ENCODE measurements at regions of chr21 and their contacts with region 1.

Region 1: DNA sequence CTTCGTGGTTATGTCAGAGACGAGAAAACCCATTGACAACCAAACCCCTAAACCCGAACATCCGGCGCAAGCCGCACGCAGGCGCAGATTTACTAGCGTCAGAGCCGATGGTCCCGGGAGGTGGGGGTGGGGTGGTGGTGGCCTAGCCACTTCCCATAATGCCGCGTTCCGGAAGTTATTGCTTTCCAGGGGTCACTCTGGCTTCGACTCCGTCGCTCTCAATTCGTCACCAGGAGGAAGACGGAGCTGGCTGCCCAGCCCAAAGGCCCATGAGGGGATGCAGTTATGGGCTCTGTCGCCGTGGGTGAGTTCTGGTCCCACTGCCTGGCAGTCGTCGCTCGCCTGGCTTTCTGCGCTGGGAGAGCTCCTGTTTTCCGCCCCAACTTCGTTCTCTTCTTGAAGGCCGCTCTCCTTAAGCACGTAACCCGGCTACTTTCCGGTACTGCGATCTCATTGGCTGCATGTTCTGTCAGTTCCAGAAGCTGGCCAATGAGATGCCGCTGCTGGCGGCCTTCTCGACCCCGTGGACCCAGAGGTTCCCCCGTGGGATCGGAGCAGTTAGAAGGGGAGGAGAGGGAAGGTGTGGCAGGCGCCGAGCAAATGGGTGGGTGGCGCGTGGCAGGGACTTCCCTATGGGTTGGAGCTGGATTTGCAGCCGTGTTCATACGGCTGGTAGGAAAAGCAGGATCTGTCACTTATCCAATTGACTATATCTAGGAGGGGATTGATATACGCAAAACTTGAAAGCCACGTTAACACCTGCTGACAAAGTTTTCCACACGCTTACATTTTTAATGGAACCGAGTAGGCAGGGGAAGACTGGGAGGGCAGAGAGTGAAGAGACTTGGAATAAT is at the start of gene USP16:
- DNase-seq: peak; percentile 97
- ATAC-seq: peak; percentile 97
- H3K4me3 Mint-ChIP-seq: peak within 1 kb of the TSS; percentile 96
- H3K27ac Mint-ChIP-seq: peak within 1 kb of the TSS; percentile 97
- H3K4me1 Mint-ChIP-seq: peaks cover 66% of the 10 kb centered on the region
- H3K27me3 Mint-ChIP-seq: no peaks in the 10 kb centered on the region
- total RNA-seq, gene USP16: 26.7 to 35.5 TPM

Region 2: DNA sequence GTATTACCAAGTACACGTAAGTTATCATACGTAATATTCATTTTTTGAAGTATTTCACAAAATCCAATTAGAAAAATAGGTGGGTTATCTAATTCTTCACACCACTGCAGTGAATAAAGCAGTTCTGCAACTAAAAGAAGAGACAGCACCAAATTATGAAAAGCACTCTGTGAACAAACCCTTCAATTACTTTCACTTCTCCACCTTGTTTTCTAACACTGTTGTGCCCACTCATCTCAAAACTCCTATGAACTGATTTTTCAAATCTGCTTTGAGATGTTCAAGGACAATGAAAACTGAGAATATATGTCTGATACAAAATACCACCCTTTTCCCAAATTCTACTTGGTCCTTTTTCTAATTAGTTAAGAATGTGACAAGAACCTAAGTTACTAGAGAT is 71.5 kb before region 1 on chr21:
- CTCF ChIA-PET with region 1: no interaction called
- DNase-seq: no peak
- ATAC-seq: no peak
- H3K4me3 Mint-ChIP-seq: no peak overlapping the region
- H3K27ac Mint-ChIP-seq: no peak overlapping the region
- H3K4me1 Mint-ChIP-seq: peaks cover 20% of the 10 kb centered on the region
- H3K27me3 Mint-ChIP-seq: no peaks in the 10 kb centered on the region

Region 3: DNA sequence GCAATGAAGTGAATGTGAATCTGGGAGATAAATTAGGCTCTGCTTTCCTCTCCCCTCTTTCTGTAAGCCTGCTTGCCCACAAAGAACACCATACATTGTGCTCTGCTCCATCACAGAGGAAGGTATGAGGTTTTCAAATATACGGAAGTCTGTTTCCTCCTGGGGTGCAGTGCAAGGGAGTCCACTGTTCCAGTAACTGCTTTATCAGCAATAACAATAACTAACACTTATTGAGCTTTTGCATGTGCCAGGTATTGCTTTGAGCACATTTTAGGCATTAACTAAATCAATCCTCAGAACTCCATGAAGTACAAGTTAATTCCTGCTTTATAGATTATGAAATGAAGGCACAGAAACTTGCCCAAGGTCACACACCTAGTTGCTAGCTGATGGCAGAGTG is 42.1 kb before region 1 on chr21:
- CTCF ChIA-PET with region 1: no interaction called
- DNase-seq: no peak
- ATAC-seq: no peak
- H3K4me3 Mint-ChIP-seq: no peak overlapping the region
- H3K27ac Mint-ChIP-seq: peak overlapping the region; percentile 33
- H3K4me1 Mint-ChIP-seq: peaks cover 6% of the 10 kb centered on the region
- H3K27me3 Mint-ChIP-seq: no peaks in the 10 kb centered on the region

Region 4: GRCh38 chr21:28992526-28993292 is 32.0 kb before region 1 on chr21 and contains the start of gene LTN1:
- CTCF ChIA-PET with region 1: interaction called, 14 read pairs
- DNase-seq: peak; percentile 100
- ATAC-seq: peak; percentile 95
- H3K4me3 Mint-ChIP-seq: peak within 1 kb of the TSS; percentile 87
- H3K27ac Mint-ChIP-seq: peak within 1 kb of the TSS; percentile 96
- H3K4me1 Mint-ChIP-seq: peaks cover 33% of the 10 kb centered on the region
- H3K27me3 Mint-ChIP-seq: no peaks in the 10 kb centered on the region
- total RNA-seq, gene LTN1: 24.7 to 27.1 TPM

Region 5: DNA sequence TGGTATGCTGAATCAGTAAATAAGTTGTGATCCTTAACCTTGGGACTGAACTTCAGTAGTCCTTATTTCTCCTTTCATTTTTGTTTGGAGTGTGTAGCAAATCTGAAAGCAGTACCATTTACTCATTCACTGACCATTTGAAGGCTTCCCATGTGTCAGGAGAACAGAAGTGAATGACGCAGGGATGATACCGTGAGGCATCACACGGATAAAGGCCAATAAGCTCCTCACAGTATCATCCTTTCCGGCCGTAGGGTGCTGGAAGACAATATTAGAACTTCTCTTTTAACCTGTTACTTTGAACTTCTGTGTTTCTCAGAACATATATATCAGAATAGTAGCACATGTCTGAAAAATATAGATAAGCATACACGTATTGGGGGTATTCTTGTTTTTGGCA is 295.3 kb after region 1 on chr21:
- CTCF ChIA-PET with region 1: no interaction called
- DNase-seq: no peak
- ATAC-seq: no peak
- H3K4me3 Mint-ChIP-seq: no peak overlapping the region
- H3K27ac Mint-ChIP-seq: no peak overlapping the region
- H3K4me1 Mint-ChIP-seq: peaks cover 3% of the 10 kb centered on the region
- H3K27me3 Mint-ChIP-seq: no peaks in the 10 kb centered on the region